Esophagus muscularis mucosa (tissue), 4 donors: ENCODE measurements at regions of chr3 and their contacts with region 1.

Region 1: GRCh38 chr3:112561731-112562688 is at the starts of genes ATG3 and SLC35A5:
- DNase-seq: peak; percentile 100
- H3K4me3 ChIP-seq: peak within 1 kb of the TSS; percentile 84 to 95 (median 90)
- H3K27ac ChIP-seq: peak within 1 kb of the TSS; percentile 94 to 98 (median 94)
- H3K4me1 ChIP-seq: peaks cover 22 to 44% (median 39%) of the 10 kb centered on the region in 4 donors
- H3K27me3 ChIP-seq: no peaks in the 10 kb centered on the region
- CTCF ChIP-seq: no peak
- EP300 ChIP-seq: no peak
- POLR2A ChIP-seq: peak; percentile 40
- total RNA-seq, gene ATG3: 41.3 to 60.3 (median 57.2) TPM
- total RNA-seq, gene SLC35A5: 18.6 to 28.7 (median 22.8) TPM

Region 2: GRCh38 chr3:112635671-112636070 is 73.7 kb after region 1 on chr3:
- intact Hi-C with region 1: loop called (anchors 5 kb)
- DNase-seq: no peak
- H3K4me3 ChIP-seq: peak overlapping the region; percentile 49 to 57 (median 56)
- H3K27ac ChIP-seq: peak overlapping the region; percentile 83 to 84 (median 83)
- H3K4me1 ChIP-seq: peaks cover 18 to 98% (median 93%) of the 10 kb centered on the region in 4 donors
- H3K27me3 ChIP-seq: no peaks in the 10 kb centered on the region
- CTCF ChIP-seq: no peak
- EP300 ChIP-seq: no peak
- POLR2A ChIP-seq: no peak

Region 3: DNA sequence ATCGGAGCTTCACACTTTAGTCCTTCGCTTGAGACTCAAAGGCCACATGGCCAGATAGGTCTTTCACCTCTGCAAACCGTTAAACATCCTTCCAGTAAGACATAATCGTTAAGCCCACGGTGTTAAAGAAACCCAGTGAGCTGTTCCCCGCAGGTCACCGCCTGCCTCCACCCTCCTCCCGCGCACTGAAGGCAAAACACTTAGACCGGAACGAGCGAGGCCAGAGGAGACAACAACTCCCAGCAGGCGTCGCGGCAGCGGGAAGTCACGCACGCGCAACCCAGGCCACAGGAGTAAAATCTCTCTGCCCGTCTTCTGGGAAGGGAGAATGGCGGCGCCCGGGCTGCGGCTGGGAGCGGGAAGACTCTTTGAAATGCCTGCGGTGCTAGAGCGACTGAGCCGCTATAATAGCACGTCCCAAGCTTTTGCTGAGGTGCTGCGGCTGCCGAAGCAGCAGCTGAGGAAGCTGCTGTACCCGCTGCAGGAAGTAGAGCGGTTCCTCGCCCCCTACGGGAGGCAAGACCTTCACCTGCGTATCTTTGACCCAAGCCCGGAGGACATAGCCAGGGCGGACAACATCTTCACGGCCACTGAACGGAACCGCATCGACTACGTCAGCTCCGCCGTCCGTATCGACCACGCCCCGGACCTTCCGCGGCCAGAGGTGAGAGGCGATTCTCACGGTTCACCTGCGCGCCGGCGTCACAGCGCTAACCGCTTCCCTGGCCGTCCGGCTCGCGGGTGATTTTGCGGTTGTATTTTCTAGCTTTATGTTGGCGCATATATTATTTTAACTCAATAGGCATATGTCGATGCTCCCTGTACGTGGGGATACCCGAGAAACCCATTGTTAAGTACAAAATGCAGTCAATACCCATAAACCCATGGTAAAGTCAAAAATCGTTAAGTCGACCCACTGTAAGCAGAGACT is 428.9 kb after region 1 on chr3 and contains the start of gene GTPBP8:
- intact Hi-C with region 1: loop called (anchors 5 kb)
- DNase-seq: peak; percentile 97
- H3K4me3 ChIP-seq: peak within 1 kb of the TSS; percentile 74 to 86 (median 84)
- H3K27ac ChIP-seq: peak within 1 kb of the TSS; percentile 90 to 96 (median 95)
- H3K4me1 ChIP-seq: peaks cover 12 to 26% (median 23%) of the 10 kb centered on the region in 4 donors
- H3K27me3 ChIP-seq: no peaks in the 10 kb centered on the region
- CTCF ChIP-seq: peak in 1 of 3 experiments; percentile 20
- EP300 ChIP-seq: no peak
- POLR2A ChIP-seq: peak; percentile 43
- total RNA-seq, gene GTPBP8: 21.6 to 30.8 (median 24.8) TPM